ENCODE measurements at regions of chr15 and their contacts with region 1.

Region 1: GRCh38 chr15:25635191-25635590 is 196.4 kb upstream of the UBE3A start:
- DNase-seq: no peak
- H3K4me3 ChIP-seq: no peak overlapping the region
- H3K27ac ChIP-seq: no peak overlapping the region
- H3K4me1 ChIP-seq: no peaks in the 10 kb centered on the region
- H3K27me3 ChIP-seq: no peaks in the 10 kb centered on the region
- CTCF ChIP-seq: no peak
- POLR2A ChIP-seq: no peak

Region 2: GRCh38 chr15:25241241-25241801 is 393.9 kb before region 1 on chr15:
- intact Hi-C with region 1: no loop called
- DNase-seq: peak in 3 of 7 donors; percentile 3 to 18 (median 8)
- H3K4me3 ChIP-seq: no peak overlapping the region
- H3K27ac ChIP-seq: no peak overlapping the region
- H3K4me1 ChIP-seq: no peaks in the 10 kb centered on the region
- H3K27me3 ChIP-seq: no peaks in the 10 kb centered on the region
- CTCF ChIP-seq: no peak
- POLR2A ChIP-seq: no peak

Region 3: GRCh38 chr15:25557926-25558325 is 77.3 kb before region 1 on chr15:
- intact Hi-C with region 1: loop called in 1 of 2 experiments (anchors 10 kb)
- DNase-seq: no peak
- H3K4me3 ChIP-seq: no peak overlapping the region
- H3K27ac ChIP-seq: no peak overlapping the region
- H3K4me1 ChIP-seq: no peaks in the 10 kb centered on the region
- H3K27me3 ChIP-seq: no peaks in the 10 kb centered on the region
- CTCF ChIP-seq: no peak
- POLR2A ChIP-seq: no peak

Region 4: DNA sequence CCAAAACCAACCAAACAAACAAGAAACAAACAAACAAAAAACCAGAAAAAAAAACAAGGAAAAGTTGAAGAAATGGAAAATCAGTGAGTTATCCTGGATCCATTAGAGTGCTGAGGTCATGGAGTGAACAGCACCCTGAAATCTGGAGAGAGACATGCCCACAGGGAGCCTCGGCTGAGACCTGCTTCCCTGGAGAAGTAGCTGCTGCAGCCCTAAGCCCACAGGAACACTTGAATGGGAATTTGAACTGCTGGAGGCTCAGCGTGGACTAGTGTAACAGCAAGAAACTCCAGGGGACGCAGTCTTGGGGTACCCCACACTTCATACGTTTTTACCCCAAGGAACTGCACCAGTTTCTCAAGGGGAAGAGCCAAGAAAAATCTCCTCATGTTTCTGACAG is 52.3 kb before region 1 on chr15:
- intact Hi-C with region 1: no loop called
- DNase-seq: no peak
- H3K4me3 ChIP-seq: no peak overlapping the region
- H3K27ac ChIP-seq: no peak overlapping the region
- H3K4me1 ChIP-seq: no peaks in the 10 kb centered on the region
- H3K27me3 ChIP-seq: no peaks in the 10 kb centered on the region
- CTCF ChIP-seq: no peak
- POLR2A ChIP-seq: no peak

Measured in adrenal gland (tissue), 19 donors.